ENCODE measurements at regions of chr9 and their contacts with region 1.

Region 1: DNA sequence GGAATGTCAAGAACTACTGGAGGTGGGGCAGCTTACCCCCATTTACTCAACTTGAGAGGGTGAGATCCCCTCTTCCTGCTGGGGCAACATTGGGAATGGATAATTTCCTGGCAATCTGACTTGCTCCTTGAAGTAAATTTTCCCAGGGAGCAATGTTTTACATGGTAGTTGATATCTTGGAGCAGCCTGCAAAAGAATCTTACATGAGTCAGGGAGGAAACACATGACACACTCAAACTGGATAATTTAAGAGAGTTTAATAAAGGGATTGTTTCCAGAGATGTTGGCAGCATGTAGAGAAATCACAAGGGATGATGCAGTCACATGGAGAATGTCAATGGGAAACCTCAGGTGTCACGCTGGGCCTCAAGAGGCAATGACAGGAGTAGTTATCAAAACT is 212.5 kb downstream of the GAS1 start:
- DNase-seq: no peak
- ATAC-seq: no peak
- H3K4me3 Mint-ChIP-seq: no peak overlapping the region
- H3K27ac Mint-ChIP-seq: no peak overlapping the region
- H3K4me1 Mint-ChIP-seq: no peaks in the 10 kb centered on the region
- H3K27me3 Mint-ChIP-seq: peaks cover 4% of the 10 kb centered on the region

Region 2: DNA sequence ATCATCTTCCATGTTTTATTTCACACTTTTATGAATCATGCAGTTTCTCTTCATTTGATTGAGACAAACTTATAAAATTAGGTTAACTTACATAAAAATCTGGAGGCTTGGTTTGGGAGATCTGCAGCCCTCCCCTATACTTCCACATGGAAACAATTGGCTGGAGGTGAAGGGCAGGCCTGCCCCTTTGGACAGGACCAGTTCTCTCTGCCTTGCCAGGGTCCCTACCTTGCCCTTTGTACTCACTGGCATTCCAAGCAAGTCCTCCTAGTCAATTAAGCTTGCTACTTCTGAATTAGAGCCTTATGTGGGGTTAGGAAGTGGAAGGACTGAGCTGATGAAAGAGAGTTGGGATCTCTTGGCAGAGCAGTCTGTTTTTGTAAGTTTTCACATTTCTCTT is 44.7 kb before region 1 on chr9:
- CTCF ChIA-PET with region 1: no interaction called
- POLR2A ChIA-PET with region 1: no interaction called
- intact Hi-C with region 1: loop called in 1 of 2 experiments (anchors 5 kb)
- DNase-seq: no peak
- ATAC-seq: no peak
- H3K4me3 Mint-ChIP-seq: no peak overlapping the region
- H3K27ac Mint-ChIP-seq: no peak overlapping the region
- H3K4me1 Mint-ChIP-seq: no peaks in the 10 kb centered on the region
- H3K27me3 Mint-ChIP-seq: peaks cover 7% of the 10 kb centered on the region